B cell (primary cell): ENCODE measurements at regions of chr18 and their contacts with region 1.

Region 1: DNA sequence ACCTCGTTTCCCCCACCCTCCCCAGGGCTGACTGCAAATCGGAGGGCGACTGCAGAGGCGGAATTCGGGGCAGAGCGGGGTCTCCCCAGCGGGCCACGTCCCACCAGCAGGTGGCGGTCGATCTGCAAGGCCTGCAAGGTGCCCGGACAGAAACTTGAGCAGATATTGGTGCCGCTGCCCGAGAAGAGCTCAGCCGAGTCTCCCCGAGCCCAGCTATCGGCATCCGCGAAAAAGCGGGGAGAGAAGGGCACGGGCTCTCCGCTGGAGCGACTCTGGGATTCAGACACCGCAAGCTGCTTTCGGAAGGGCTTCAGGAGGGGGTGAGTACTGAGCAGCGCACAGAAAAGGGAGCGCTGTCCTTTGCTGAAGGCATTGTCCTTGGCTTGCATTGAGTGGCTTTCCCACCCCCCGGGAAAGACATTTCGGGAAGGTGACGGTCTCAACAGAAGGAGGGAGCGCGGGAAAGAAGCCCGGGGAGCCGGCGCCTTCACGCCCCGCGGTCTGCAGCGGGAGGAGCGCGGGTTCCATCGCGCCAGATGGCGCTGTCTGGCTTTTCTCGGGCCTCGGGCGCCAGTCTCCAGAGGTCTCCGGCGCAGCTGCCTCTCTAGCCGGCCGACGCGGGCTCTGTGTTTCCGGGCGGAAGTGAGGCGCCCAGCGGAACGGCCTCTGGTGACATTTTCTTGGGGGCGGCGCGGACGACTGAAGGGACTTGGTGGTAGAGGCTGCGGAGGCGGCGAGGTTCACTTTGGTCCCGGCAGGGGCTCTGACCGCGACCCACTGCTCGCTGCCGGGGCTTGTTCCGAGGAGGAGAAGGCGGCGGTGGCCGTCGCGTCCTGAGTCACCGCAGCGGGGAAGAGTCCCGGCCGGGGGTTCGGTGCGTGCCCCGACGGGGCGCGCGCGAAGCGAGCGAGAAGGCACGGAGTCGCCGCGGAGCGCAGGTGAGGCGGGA is 69.5 kb downstream of the HAUS1 start:
- DNase-seq: peak; percentile 95
- ATAC-seq: peak; percentile 87
- H3K4me3 ChIP-seq: peak overlapping the region; percentile 90 to 100 (median 98)
- H3K4me3 Mint-ChIP-seq: peak overlapping the region; percentile 97
- H3K27ac ChIP-seq: peak overlapping the region; percentile 88 to 94
- H3K27ac Mint-ChIP-seq: peak overlapping the region; percentile 94
- H3K4me1 ChIP-seq: peaks cover 25 to 33% of the 10 kb centered on the region in 2 donors
- H3K4me1 Mint-ChIP-seq: peaks cover 45% of the 10 kb centered on the region
- H3K27me3 ChIP-seq: no peaks in the 10 kb centered on the region
- H3K27me3 Mint-ChIP-seq: no peaks in the 10 kb centered on the region
- CTCF ChIP-seq: peak; percentile 96

Region 2: DNA sequence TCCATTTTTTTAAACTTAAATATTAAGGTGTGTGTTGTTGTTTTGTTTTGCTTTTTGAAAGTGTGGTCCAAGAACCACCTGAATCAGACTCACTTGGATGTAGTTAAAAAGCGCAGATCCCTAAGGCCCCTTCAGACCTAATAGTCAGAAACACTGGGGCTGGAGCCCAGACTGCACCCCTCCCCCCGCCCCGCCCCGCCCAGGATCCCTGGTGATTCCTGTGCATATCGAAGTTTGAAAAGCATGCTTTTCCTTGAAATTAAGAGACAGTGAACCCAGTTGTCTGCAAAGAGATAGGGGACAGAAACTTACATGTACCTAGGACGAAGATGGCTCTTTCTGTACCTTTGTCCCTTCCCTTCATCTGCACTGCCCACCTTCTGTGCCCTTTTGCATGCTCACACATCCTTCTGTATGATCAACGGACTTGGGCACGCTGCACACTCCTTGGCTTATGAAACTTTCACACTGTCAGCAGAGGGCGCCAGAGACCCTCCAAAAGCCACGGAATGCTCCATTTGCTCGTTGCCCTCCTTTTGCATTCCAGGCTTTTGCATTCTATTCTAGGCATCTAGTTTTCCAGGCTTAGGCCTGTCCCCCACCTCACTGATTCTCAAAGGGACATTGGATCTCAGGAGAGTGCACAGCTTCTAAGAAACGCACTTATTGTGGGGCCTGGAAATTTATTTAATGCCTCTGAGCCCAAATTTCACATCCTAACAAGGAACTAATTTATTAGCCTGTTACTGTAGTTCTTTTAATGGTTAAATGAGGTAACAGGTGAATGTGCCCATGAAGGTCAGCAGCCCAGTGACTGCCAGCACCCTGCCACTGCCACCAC is 482.5 kb before region 1 on chr18:
- CTCF ChIA-PET with region 1: no interaction called
- POLR2A ChIA-PET with region 1: no interaction called
- intact Hi-C with region 1: loop called (anchors 5 kb)
- DNase-seq: peak; percentile 77
- ATAC-seq: no peak
- H3K4me3 ChIP-seq: no peak overlapping the region
- H3K4me3 Mint-ChIP-seq: no peak overlapping the region
- H3K27ac ChIP-seq: no peak overlapping the region
- H3K27ac Mint-ChIP-seq: peak overlapping the region; percentile 43
- H3K4me1 ChIP-seq: peaks cover 32 to 44% of the 10 kb centered on the region in 2 donors
- H3K4me1 Mint-ChIP-seq: peaks cover 40% of the 10 kb centered on the region
- H3K27me3 ChIP-seq: no peaks in the 10 kb centered on the region
- H3K27me3 Mint-ChIP-seq: peaks cover 7% of the 10 kb centered on the region
- CTCF ChIP-seq: peak; percentile 86

Region 3: GRCh38 chr18:46104128-46104911 is 69.3 kb before region 1 on chr18 and contains the start of gene HAUS1:
- CTCF ChIA-PET with region 1: interaction called, 7 read pairs
- POLR2A ChIA-PET with region 1: no interaction called
- intact Hi-C with region 1: loop called (anchors 1 kb)
- DNase-seq: peak; percentile 80
- ATAC-seq: peak; percentile 100
- H3K4me3 ChIP-seq: peak within 1 kb of the TSS; percentile 79 to 100 (median 90)
- H3K4me3 Mint-ChIP-seq: peak within 1 kb of the TSS; percentile 98
- H3K27ac ChIP-seq: peak within 1 kb of the TSS; percentile 56 to 64
- H3K27ac Mint-ChIP-seq: peak within 1 kb of the TSS; percentile 91
- H3K4me1 ChIP-seq: peaks cover 8 to 11% of the 10 kb centered on the region in 2 donors
- H3K4me1 Mint-ChIP-seq: peaks cover 18% of the 10 kb centered on the region
- H3K27me3 ChIP-seq: no peaks in the 10 kb centered on the region
- H3K27me3 Mint-ChIP-seq: no peaks in the 10 kb centered on the region
- CTCF ChIP-seq: no peak
- total RNA-seq, gene HAUS1: 28.4 and 30.9 TPM in 2 replicates

Region 4: GRCh38 chr18:46204143-46204542 is 30.5 kb after region 1 on chr18:
- CTCF ChIA-PET with region 1: interaction called, 7 read pairs
- POLR2A ChIA-PET with region 1: interaction called, 4 read pairs
- intact Hi-C with region 1: loop called (anchors 2 kb)
- DNase-seq: no peak
- ATAC-seq: no peak
- H3K4me3 ChIP-seq: no peak overlapping the region
- H3K4me3 Mint-ChIP-seq: no peak overlapping the region
- H3K27ac ChIP-seq: peak overlapping the region in 1 of 2 donors; percentile 29
- H3K27ac Mint-ChIP-seq: no peak overlapping the region
- H3K4me1 ChIP-seq: peaks cover 20 to 33% of the 10 kb centered on the region in 2 donors
- H3K4me1 Mint-ChIP-seq: peaks cover 73% of the 10 kb centered on the region
- H3K27me3 ChIP-seq: no peaks in the 10 kb centered on the region
- H3K27me3 Mint-ChIP-seq: no peaks in the 10 kb centered on the region
- CTCF ChIP-seq: no peak

Region 5: GRCh38 chr18:46250084-46250811 is 76.6 kb after region 1 on chr18:
- CTCF ChIA-PET with region 1: interaction called, 34 read pairs
- POLR2A ChIA-PET with region 1: interaction called, 15 read pairs
- intact Hi-C with region 1: loop called (anchors 1 kb)
- DNase-seq: peak; percentile 93
- ATAC-seq: peak; percentile 94
- H3K4me3 ChIP-seq: peak overlapping the region; percentile 19 to 53 (median 42)
- H3K4me3 Mint-ChIP-seq: peak overlapping the region; percentile 84
- H3K27ac ChIP-seq: peak overlapping the region; percentile 96 to 98
- H3K27ac Mint-ChIP-seq: peak overlapping the region; percentile 93
- H3K4me1 ChIP-seq: peaks cover 19 to 31% of the 10 kb centered on the region in 2 donors
- H3K4me1 Mint-ChIP-seq: peaks cover 36% of the 10 kb centered on the region
- H3K27me3 ChIP-seq: no peaks in the 10 kb centered on the region
- H3K27me3 Mint-ChIP-seq: no peaks in the 10 kb centered on the region
- CTCF ChIP-seq: no peak

Region 6: GRCh38 chr18:46481048-46481846 is 307.6 kb after region 1 on chr18:
- CTCF ChIA-PET with region 1: interaction called, 14 read pairs
- POLR2A ChIA-PET with region 1: no interaction called
- intact Hi-C with region 1: no loop called
- DNase-seq: peak; percentile 51
- ATAC-seq: peak; percentile 14
- H3K4me3 ChIP-seq: no peak overlapping the region
- H3K4me3 Mint-ChIP-seq: no peak overlapping the region
- H3K27ac ChIP-seq: no peak overlapping the region
- H3K27ac Mint-ChIP-seq: no peak overlapping the region
- H3K4me1 ChIP-seq: no peaks in the 10 kb centered on the region
- H3K4me1 Mint-ChIP-seq: no peaks in the 10 kb centered on the region
- H3K27me3 ChIP-seq: no peaks in the 10 kb centered on the region
- H3K27me3 Mint-ChIP-seq: peaks cover 25% of the 10 kb centered on the region
- CTCF ChIP-seq: peak; percentile 76

Region 7: DNA sequence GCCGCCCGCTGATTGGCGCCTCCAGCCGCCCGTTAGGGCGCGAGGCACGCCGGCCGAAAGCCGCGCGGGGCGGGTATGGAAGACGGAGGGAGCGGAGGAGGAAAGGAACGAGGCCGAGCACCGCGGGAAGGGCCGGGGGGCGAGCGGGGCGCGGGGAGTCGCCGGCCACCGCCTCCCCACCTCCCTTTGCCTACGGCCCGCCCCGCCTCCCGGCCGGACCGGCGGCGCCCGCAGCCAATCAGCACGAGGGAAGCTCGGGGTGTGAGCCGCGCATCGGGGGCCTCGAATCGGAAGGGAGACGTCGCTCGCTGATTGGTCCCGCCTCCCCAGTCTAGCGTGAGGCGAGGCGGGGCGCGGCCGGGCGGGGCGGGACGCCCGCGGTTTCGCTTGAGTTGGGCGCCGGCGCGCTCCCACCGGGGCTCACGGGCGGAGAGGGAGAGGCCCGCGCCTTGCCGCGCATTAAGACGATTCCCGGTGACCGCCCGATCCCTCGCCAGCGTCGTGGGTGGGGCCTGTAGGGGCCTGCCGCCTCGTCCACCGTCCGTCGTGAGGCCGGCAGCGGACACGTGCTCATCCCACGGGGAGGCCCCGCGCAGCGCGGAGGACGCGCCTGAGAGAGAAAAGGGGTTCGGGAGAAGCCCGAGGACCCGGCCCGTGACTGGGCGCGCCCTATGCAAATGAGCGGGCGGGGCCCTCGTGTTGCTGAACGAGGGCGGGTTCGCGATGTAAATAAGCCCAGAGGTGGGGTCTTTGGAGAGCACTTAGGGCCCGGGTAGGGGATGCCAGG is 1757.5 kb after region 1 on chr18:
- CTCF ChIA-PET with region 1: no interaction called
- POLR2A ChIA-PET with region 1: no interaction called
- intact Hi-C with region 1: loop called (anchors 10 kb)
- DNase-seq: peak; percentile 97
- ATAC-seq: peak; percentile 79
- H3K4me3 ChIP-seq: peak overlapping the region; percentile 56 to 91 (median 64)
- H3K4me3 Mint-ChIP-seq: peak overlapping the region; percentile 85
- H3K27ac ChIP-seq: peak overlapping the region; percentile 91 to 94
- H3K27ac Mint-ChIP-seq: peak overlapping the region; percentile 85
- H3K4me1 ChIP-seq: peaks cover 22 to 23% of the 10 kb centered on the region in 2 donors
- H3K4me1 Mint-ChIP-seq: peaks cover 37% of the 10 kb centered on the region
- H3K27me3 ChIP-seq: no peaks in the 10 kb centered on the region
- H3K27me3 Mint-ChIP-seq: peaks cover 6% of the 10 kb centered on the region
- CTCF ChIP-seq: no peak